Posterior vena cava (tissue), 2 donors: ENCODE measurements at regions of chr14 and their contacts with region 1.

Region 1: GRCh38 chr14:49959822-49960408 is 67.0 kb downstream of the ARF6 start:
- DNase-seq: no peak

Region 2: GRCh38 chr14:49908432-49908781 is 51.5 kb before region 1 on chr14:
- intact Hi-C with region 1: loop called in 1 of 2 experiments (anchors 5 kb)
- DNase-seq: no peak

Region 3: GRCh38 chr14:50116181-50116956 is 156.5 kb after region 1 on chr14 and contains the start of gene VCPKMT:
- intact Hi-C with region 1: no loop called
- DNase-seq: peak; percentile 98
- total RNA-seq, gene VCPKMT: 5.8 to 6.2 TPM